Right ventricle myocardium inferior (tissue), 1 donor: ENCODE measurements at regions of chr11 and their contacts with region 1.

Region 1: GRCh38 chr11:100883830-100884229 is 196.7 kb downstream of the ARHGAP42 start:
- DNase-seq: no peak
- ATAC-seq: no peak

Region 2: GRCh38 chr11:100827934-100828661 is 55.7 kb before region 1 on chr11:
- intact Hi-C with region 1: no loop called
- DNase-seq: no peak
- ATAC-seq: no peak

Region 3: GRCh38 chr11:100918551-100919500 is 35.0 kb after region 1 on chr11:
- intact Hi-C with region 1: loop called (anchors 5 kb)
- DNase-seq: no peak
- ATAC-seq: no peak